Caco-2 (cell line): ENCODE measurements at regions of chr17 and their contacts with region 1.

Region 1: GRCh38 chr17:27430882-27431491 is 25.3 kb upstream of the KSR1 start:
- DNase-seq: peak; percentile 80 to 84
- H3K4me3 ChIP-seq: no peak overlapping the region
- H3K4me3 Mint-ChIP-seq: no peak overlapping the region
- H3K27ac Mint-ChIP-seq: no peak overlapping the region
- H3K4me1 ChIP-seq: 0 out of 2 replicates have a peak, but pooled peaks cover 7% of the 10 kb centered on the region
- H3K4me1 Mint-ChIP-seq: no peaks in the 10 kb centered on the region
- H3K27me3 ChIP-seq: 0 out of 2 replicates have a peak, but pooled peaks cover 1% of the 10 kb centered on the region
- H3K27me3 Mint-ChIP-seq: no peaks in the 10 kb centered on the region
- CTCF ChIP-seq: peak; percentile 94 to 98

Region 2: DNA sequence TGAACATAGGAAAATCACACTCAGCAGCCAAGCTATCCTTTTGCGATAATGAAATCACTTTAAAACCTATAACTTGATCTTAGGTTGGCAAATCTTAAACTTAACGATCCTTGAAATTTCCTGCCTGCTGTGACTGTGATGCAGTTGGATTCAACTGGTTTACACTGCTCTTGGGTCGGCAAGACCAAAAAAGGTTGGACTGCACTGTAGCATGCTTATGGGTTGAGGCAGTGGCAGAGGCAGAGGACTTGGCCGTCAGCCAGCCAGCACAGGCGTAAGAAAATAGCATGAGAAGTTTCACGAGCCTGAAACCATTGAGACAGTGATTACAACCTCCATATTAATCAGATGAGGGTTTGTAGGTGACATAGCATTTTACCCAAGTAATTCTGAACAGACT is 115.7 kb before region 1 on chr17:
- CTCF ChIA-PET with region 1: no interaction called
- POLR2A ChIA-PET with region 1: no interaction called
- intact Hi-C with region 1: no loop called
- DNase-seq: no peak
- H3K4me3 ChIP-seq: no peak overlapping the region
- H3K4me3 Mint-ChIP-seq: no peak overlapping the region
- H3K27ac Mint-ChIP-seq: no peak overlapping the region
- H3K4me1 ChIP-seq: peaks cover 14% of the 10 kb centered on the region
- H3K4me1 Mint-ChIP-seq: peaks cover 15% of the 10 kb centered on the region
- H3K27me3 ChIP-seq: no peaks in the 10 kb centered on the region
- H3K27me3 Mint-ChIP-seq: no peaks in the 10 kb centered on the region
- CTCF ChIP-seq: no peak

Region 3: GRCh38 chr17:27353461-27354050 is 77.4 kb before region 1 on chr17:
- CTCF ChIA-PET with region 1: interaction called, 4 read pairs
- POLR2A ChIA-PET with region 1: no interaction called
- intact Hi-C with region 1: loop called (anchors 1 kb)
- DNase-seq: peak; percentile 94 to 96
- H3K4me3 ChIP-seq: peak overlapping the region; percentile 93
- H3K4me3 Mint-ChIP-seq: peak overlapping the region; percentile 98
- H3K27ac Mint-ChIP-seq: peak overlapping the region; percentile 99
- H3K4me1 ChIP-seq: peaks cover 9% of the 10 kb centered on the region; the same call in 1 of the 2 replicates
- H3K4me1 Mint-ChIP-seq: no peaks in the 10 kb centered on the region
- H3K27me3 ChIP-seq: no peaks in the 10 kb centered on the region
- H3K27me3 Mint-ChIP-seq: no peaks in the 10 kb centered on the region
- CTCF ChIP-seq: peak; percentile 55 to 96

Region 4: GRCh38 chr17:29219378-29220047 is 1788.5 kb after region 1 on chr17:
- CTCF ChIA-PET with region 1: no interaction called
- POLR2A ChIA-PET with region 1: no interaction called
- intact Hi-C with region 1: no loop called
- DNase-seq: peak; percentile 86 to 92
- H3K4me3 ChIP-seq: no peak overlapping the region
- H3K4me3 Mint-ChIP-seq: no peak overlapping the region
- H3K27ac Mint-ChIP-seq: no peak overlapping the region
- H3K4me1 ChIP-seq: peaks cover 10% of the 10 kb centered on the region; the same call in 1 of the 2 replicates
- H3K4me1 Mint-ChIP-seq: peaks cover 7% of the 10 kb centered on the region
- H3K27me3 ChIP-seq: no peaks in the 10 kb centered on the region
- H3K27me3 Mint-ChIP-seq: no peaks in the 10 kb centered on the region
- CTCF ChIP-seq: peak; percentile 91 to 97